HEK293 (cell line): ENCODE measurements at regions of chr1 and their contacts with region 1.

Region 1: DNA sequence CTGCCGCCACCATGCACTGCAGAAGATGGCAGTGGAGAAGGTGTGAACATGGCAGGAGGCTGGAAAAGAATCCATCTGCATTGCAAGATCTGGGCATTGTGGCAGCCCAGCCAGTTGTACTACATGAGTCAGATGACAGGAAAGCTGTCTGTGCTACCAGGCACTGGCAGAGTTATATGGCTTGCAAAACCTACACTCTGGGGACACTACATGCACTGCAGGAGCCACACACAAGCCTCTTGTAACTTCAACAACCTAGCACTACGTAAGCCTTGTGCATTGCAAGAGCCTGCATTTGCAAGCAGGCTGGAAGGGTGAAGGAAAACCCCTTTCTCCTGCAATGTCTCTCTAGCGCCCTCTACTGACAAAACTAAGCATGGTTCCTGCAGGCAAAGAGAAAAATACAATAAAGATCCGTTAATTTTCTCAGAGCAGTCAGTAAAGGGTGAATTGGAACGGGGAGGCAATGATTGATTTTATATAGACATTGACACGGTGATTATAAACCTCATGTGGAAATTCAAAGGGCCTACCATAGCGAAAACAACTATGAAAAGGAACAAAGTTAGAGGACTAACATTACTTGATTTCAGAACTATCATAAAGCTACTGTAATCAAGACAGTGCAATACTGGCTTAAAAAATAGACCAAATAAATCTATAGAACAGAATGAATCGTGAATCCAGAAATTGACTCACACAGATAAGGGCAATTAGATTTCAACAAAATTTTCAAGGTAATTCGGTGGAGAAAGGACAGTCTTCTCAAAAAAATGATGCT is 26.2 kb upstream of the DYNLT5 start:
- H3K4me3 ChIP-seq: no peak overlapping the region
- H3K27ac ChIP-seq: no peak overlapping the region
- H3K4me1 ChIP-seq: no peaks in the 10 kb centered on the region
- CTCF ChIP-seq: peak; percentile 74

Region 2: GRCh38 chr1:66253330-66253921 is 472.6 kb before region 1 on chr1:
- CTCF ChIA-PET with region 1: interaction called, 33 read pairs
- POLR2A ChIA-PET with region 1: no interaction called
- H3K4me3 ChIP-seq: no peak overlapping the region
- H3K27ac ChIP-seq: no peak overlapping the region
- H3K4me1 ChIP-seq: no peaks in the 10 kb centered on the region
- CTCF ChIP-seq: peak; percentile 59; the same call in 1 of the 2 replicates

Region 3: DNA sequence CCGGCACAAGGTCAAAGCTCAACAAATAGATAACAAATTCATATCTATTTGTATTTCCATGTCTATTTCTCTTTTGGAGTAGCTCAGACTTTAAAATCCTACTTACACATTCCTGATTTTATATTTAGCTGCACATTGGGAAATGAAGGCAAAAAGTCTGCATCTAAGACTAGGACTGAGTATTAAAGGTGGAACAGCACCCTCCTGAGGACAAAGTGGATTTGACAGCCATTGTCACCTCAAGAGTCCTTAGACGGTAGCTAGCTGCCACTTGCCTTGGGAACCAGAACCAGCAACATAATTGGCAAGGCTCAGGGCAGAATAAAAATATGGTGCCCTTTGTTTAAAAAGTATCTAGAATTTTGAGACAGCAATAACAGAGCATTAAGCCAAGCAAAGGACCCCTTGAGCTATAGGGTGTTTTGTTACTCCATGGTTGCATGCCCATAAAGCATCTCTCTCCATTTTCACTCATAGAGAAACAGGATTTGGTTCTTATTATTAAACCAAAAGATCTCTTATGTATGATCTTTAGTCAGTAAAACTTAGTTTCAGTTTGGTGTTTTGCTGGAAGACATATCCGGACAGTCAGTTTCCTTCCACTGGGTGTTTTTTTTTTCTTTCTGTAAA is 222.1 kb before region 1 on chr1:
- CTCF ChIA-PET with region 1: interaction called, 31 read pairs
- POLR2A ChIA-PET with region 1: no interaction called
- H3K4me3 ChIP-seq: no peak overlapping the region
- H3K27ac ChIP-seq: no peak overlapping the region
- H3K4me1 ChIP-seq: no peaks in the 10 kb centered on the region
- CTCF ChIP-seq: peak; percentile 42; the same call in 1 of the 2 replicates

Region 4: GRCh38 chr1:66711420-66711819 is 14.7 kb before region 1 on chr1:
- CTCF ChIA-PET with region 1: interaction called, 28 read pairs
- POLR2A ChIA-PET with region 1: no interaction called
- H3K4me3 ChIP-seq: no peak overlapping the region
- H3K27ac ChIP-seq: no peak overlapping the region
- H3K4me1 ChIP-seq: no peaks in the 10 kb centered on the region
- CTCF ChIP-seq: peak; percentile 36; the same call in 1 of the 2 replicates

Region 5: DNA sequence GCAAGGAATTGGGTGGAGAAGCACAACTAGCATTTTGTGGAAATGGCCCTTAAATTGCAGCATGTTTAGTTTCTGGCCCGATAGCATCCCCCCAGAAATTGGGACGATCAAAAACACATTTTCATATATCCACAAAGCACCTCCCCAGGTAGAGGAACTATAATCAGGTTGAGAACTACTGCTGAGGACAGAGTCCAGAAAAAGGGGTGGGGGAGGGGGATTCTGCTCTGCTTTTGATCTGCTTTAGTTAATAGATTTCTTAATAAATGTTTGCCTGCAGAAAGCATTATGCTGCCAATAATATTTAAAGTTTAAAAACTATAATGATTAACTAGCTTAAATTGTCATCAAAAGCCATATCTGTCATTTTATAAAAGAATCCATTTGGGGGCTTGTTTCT is 11.8 kb after region 1 on chr1:
- CTCF ChIA-PET with region 1: interaction called, 18 read pairs
- POLR2A ChIA-PET with region 1: no interaction called
- H3K4me3 ChIP-seq: no peak overlapping the region
- H3K27ac ChIP-seq: no peak overlapping the region
- H3K4me1 ChIP-seq: no peaks in the 10 kb centered on the region
- CTCF ChIP-seq: no peak